AG04449 (cell line): ENCODE measurements at regions of chr1 and their contacts with region 1.

Region 1: GRCh38 chr1:161374373-161374772 is 6.7 kb upstream of the CFAP126 start:
- DNase-seq: no peak
- H3K4me3 ChIP-seq: no peak overlapping the region
- CTCF ChIP-seq: peak; percentile 11

Region 2: DNA sequence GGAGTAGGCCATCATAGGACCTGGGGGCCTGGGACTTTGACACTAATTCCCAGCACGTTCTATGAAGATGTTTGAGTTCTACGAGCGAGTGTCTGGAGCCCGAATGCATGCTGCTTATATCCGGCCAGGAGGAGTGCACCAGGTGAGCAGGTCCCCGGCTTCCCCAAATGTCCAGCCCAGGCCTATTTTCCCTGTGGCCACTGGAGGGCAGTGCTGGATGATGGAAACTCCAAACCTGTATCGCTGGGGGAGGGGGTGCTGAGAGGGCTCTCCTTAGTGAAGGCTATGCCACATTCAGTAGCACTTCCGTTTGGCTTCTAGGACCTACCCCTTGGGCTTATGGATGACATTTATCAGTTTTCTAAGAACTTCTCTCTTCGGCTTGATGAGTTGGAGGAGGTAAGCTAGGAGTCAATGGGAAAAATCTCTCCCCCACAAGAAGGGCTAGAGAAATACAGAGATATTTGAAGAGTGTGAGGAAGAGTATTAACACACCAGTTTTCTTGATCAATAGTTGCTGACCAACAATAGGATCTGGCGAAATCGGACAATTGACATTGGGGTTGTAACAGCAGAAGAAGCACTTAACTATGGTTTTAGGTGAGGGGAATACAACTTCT is 164.5 kb before region 1 on chr1:
- CTCF ChIA-PET with region 1: interaction called, 90 read pairs
- POLR2A ChIA-PET with region 1: no interaction called
- DNase-seq: no peak
- H3K4me3 ChIP-seq: no peak overlapping the region
- CTCF ChIP-seq: peak; percentile 90